ENCODE measurements at regions of chr17 and their contacts with region 1.

Region 1: DNA sequence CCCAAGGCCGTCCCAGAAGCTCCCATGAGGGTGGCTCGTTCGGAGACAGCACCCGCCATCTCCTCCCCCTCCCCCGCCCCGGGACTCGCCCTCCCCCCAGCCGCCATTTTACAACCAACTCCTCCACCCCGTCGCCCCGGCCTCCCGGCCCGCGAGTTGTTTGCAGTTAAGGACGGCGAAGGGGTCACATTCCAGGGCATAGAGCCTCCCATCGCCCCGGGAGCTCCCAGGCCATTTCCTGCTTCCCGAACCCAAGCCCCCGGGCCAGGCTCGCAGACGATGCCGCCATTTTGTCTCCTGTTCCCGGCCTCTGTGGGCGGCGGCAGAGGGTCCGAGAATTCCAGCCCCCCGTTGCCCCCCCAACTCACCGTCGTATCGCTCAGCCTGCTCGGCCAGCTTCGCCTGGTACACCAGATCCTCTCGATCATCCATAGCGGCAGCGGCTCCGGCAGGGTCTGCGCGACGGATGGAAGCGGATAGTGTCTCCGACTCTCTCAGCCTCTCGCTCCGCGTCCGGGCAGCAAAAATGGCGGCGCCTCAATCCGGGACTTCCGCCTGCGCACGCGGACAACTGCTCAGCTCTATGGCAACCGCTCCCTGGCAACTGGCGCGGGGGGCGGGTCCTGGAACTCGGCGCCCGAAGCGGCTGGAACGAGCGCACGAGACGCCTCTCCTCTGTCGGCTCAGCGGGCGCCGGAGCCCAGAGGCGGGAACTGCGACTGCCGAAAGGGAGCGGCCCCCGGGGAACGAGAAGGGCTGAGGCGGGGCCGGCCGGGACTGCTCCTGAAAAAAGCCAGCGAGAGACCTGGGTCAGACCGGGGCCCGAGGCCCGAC is at the start of gene YWHAE:
- DNase-seq: peak; percentile 96
- ATAC-seq: peak; percentile 81
- H3K4me3 ChIP-seq: peak within 1 kb of the TSS; percentile 75 to 94 (median 85)
- H3K4me3 Mint-ChIP-seq: peak within 1 kb of the TSS; percentile 100
- H3K27ac ChIP-seq: peak within 1 kb of the TSS; percentile 84 to 94
- H3K27ac Mint-ChIP-seq: peak within 1 kb of the TSS; percentile 99
- H3K4me1 ChIP-seq: peaks cover 20 to 35% of the 10 kb centered on the region in 2 donors
- H3K4me1 Mint-ChIP-seq: peaks cover 32% of the 10 kb centered on the region
- H3K27me3 ChIP-seq: no peaks in the 10 kb centered on the region
- H3K27me3 Mint-ChIP-seq: no peaks in the 10 kb centered on the region
- CTCF ChIP-seq: no peak
- total RNA-seq, gene YWHAE: 149 and 151 TPM in 2 replicates

Region 2: GRCh38 chr17:1423456-1424135 is 23.7 kb after region 1 on chr17:
- CTCF ChIA-PET with region 1: no interaction called
- POLR2A ChIA-PET with region 1: no interaction called
- intact Hi-C with region 1: no loop called
- DNase-seq: no peak
- ATAC-seq: no peak
- H3K4me3 ChIP-seq: no peak overlapping the region
- H3K4me3 Mint-ChIP-seq: no peak overlapping the region
- H3K27ac ChIP-seq: no peak overlapping the region
- H3K27ac Mint-ChIP-seq: no peak overlapping the region
- H3K4me1 ChIP-seq: no peaks in the 10 kb centered on the region
- H3K4me1 Mint-ChIP-seq: peaks cover 4% of the 10 kb centered on the region
- H3K27me3 ChIP-seq: no peaks in the 10 kb centered on the region
- H3K27me3 Mint-ChIP-seq: no peaks in the 10 kb centered on the region
- CTCF ChIP-seq: no peak

Region 3: DNA sequence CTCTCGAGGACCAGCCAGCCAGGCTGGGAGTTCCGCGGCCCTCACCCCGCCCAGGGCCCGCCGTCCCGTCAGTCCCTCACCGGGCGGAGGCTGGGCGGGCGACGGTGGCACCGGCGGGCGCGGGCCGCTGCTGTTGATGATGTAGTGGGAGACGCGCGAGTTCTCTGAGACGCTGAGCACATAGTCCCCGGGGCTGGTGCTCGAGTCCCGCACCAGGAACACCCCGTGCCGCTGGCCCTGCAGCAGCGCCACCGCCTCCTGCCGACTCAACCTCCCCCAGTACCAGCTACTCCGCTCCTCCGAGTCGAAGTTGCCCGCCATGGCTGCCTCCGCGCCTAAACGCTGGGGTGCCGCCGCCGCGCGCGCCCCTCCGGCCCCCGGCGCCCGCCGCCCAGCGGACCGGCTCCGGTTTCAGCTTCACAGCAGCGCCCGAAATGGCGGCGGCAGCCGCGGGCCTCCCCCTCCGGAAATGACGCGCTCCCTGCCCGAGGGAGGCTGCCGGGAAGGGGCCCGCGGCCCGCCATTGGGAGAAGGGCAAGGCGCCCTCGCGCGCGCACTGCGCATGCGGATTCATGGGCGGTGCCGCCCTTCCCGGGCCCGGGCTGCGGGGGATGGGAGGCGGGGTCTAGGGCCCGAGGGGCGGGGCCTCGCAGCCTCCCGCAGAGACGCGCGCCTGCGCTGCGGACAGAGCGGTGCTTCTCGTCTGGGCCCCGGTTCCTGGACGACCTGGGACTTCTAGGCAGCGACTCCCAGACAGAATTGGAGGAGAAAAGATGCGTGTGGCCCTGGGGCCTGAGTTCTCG is 56.1 kb after region 1 on chr17 and contains the start of gene CRK:
- CTCF ChIA-PET with region 1: no interaction called
- POLR2A ChIA-PET with region 1: interaction called, 7 read pairs
- intact Hi-C with region 1: loop called (anchors 1 kb)
- DNase-seq: peak; percentile 98
- ATAC-seq: peak; percentile 92
- H3K4me3 ChIP-seq: peak within 1 kb of the TSS; percentile 68 to 94 (median 82)
- H3K4me3 Mint-ChIP-seq: peak within 1 kb of the TSS; percentile 97
- H3K27ac ChIP-seq: peak within 1 kb of the TSS; percentile 79 to 97
- H3K27ac Mint-ChIP-seq: peak within 1 kb of the TSS; percentile 96
- H3K4me1 ChIP-seq: peaks cover 15 to 24% of the 10 kb centered on the region in 2 donors
- H3K4me1 Mint-ChIP-seq: peaks cover 47% of the 10 kb centered on the region
- H3K27me3 ChIP-seq: peaks cover 0 to 5% (median 0%) of the 10 kb centered on the region in 4 experiments
- H3K27me3 Mint-ChIP-seq: peaks cover 4% of the 10 kb centered on the region
- CTCF ChIP-seq: peak; percentile 7
- total RNA-seq, gene CRK: 31.9 and 36.4 TPM in 2 replicates

Region 4: GRCh38 chr17:1561400-1562175 is 161.7 kb after region 1 on chr17:
- CTCF ChIA-PET with region 1: no interaction called
- POLR2A ChIA-PET with region 1: no interaction called
- intact Hi-C with region 1: loop called (anchors 5 kb)
- DNase-seq: peak; percentile 67
- ATAC-seq: peak; percentile 37
- H3K4me3 ChIP-seq: peak overlapping the region; percentile 8 to 72 (median 64)
- H3K4me3 Mint-ChIP-seq: peak overlapping the region; percentile 89
- H3K27ac ChIP-seq: peak overlapping the region in 1 of 2 donors; percentile 78
- H3K27ac Mint-ChIP-seq: peak overlapping the region; percentile 78
- H3K4me1 ChIP-seq: peaks cover 20 to 29% of the 10 kb centered on the region in 2 donors
- H3K4me1 Mint-ChIP-seq: peaks cover 39% of the 10 kb centered on the region
- H3K27me3 ChIP-seq: no peaks in the 10 kb centered on the region
- H3K27me3 Mint-ChIP-seq: no peaks in the 10 kb centered on the region
- CTCF ChIP-seq: peak; percentile 36